Activated B cell treated with CpG ODN at 0.5 μM for 24 hours (primary cell): ENCODE measurements at regions of chr10 and their contacts with region 1.

Region 1: DNA sequence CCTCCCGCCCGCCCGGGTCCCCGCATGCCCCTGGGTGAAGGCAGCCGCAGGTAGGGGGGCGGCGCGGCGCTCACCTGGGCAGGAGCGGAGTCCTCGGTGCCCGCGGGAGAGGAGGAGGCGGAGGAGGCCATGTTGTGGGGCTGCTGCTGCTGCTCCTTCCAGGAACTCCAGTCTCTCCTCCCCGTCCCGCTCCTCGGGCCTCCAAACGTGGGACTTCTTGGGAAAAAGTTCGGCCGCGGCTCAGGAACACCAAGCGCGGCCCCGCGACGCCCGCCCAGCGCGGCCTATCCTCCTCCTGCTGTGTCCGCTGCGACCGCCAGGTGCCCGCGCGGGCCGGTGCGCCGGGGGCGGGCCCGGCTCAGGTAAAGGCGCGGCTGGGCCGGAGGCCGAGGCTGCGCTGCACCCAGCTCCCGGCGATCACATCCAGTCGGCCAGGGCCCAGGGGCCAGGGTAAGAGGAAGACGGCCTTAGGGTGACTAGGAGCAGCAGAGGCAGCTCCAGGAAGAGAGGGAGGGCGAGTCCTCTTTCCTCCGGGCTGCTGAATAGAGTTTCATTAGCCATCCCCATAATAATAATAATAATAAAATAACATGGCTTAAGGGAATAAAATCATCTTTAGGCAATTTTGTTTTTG is 45.0 kb upstream of the CDK1 start:
- DNase-seq: peak; percentile 45
- ATAC-seq: peak; percentile 83
- H3K4me3 Mint-ChIP-seq: peak overlapping the region; percentile 93
- H3K27ac Mint-ChIP-seq: no peak overlapping the region
- H3K4me1 Mint-ChIP-seq: peaks cover 36% of the 10 kb centered on the region
- H3K27me3 Mint-ChIP-seq: peaks cover 4% of the 10 kb centered on the region
- CTCF ChIP-seq: no peak

Region 2: DNA sequence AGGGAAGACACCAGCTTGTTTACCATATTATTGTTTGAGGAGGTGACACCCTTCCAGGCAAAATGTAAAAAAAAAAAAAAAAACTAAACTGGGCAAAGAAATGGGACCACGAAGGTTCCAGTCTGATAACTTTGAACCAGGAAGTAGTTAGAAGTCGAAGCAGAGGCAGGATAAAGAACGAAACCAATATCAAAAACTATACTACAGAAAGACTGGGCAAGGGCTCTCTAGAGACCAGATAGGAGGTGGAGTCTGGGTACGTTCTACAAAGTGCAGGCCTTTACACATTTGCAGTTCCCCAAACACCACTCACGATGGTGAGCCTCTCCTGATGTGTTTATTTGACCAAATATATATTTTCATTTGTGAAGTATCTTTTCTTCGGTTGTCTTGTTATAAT is 80.7 kb before region 1 on chr10:
- CTCF ChIA-PET with region 1: no interaction called
- POLR2A ChIA-PET with region 1: no interaction called
- intact Hi-C with region 1: loop called (anchors 2 kb)
- DNase-seq: no peak
- ATAC-seq: peak; percentile 100
- H3K4me3 Mint-ChIP-seq: peak overlapping the region; percentile 28
- H3K27ac Mint-ChIP-seq: peak overlapping the region; percentile 64
- H3K4me1 Mint-ChIP-seq: peaks cover 14% of the 10 kb centered on the region
- H3K27me3 Mint-ChIP-seq: no peaks in the 10 kb centered on the region
- CTCF ChIP-seq: no peak

Region 3: DNA sequence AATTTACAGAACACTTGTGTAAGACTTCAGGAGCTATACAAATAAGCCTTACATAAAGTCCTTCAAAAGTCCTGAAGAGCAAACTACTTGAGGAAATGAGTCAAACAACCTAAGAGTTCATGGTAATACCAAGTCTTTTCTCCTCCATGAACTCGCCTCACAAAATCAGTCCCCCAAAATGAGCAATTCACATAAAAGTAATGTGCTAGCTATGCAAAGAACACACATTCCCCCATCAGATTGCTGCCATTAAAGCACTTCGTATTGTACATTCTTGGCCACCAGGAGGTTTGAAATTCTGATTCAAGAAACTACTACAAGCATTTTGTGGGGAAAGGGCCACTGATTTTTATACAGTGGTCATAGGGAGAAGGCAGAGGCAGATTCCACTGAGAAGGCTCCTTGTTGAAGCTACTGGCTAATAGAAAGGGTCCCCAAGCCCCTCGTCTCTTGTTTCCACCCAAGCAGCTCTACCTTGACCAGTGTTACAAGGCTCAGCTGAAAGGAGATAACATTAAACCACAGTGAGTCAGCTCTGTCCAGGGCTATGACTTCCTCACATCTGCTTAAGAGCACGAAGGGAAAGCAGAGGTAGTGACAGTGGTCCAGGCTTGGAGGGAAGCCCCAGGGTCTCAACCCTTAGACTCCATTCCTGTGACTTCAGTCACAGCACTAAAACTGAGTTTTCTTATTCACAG is 70.2 kb before region 1 on chr10:
- CTCF ChIA-PET with region 1: no interaction called
- POLR2A ChIA-PET with region 1: no interaction called
- intact Hi-C with region 1: no loop called
- DNase-seq: no peak
- ATAC-seq: no peak
- H3K4me3 Mint-ChIP-seq: no peak overlapping the region
- H3K27ac Mint-ChIP-seq: no peak overlapping the region
- H3K4me1 Mint-ChIP-seq: no peaks in the 10 kb centered on the region
- H3K27me3 Mint-ChIP-seq: peaks cover 2% of the 10 kb centered on the region
- CTCF ChIP-seq: no peak

Region 4: DNA sequence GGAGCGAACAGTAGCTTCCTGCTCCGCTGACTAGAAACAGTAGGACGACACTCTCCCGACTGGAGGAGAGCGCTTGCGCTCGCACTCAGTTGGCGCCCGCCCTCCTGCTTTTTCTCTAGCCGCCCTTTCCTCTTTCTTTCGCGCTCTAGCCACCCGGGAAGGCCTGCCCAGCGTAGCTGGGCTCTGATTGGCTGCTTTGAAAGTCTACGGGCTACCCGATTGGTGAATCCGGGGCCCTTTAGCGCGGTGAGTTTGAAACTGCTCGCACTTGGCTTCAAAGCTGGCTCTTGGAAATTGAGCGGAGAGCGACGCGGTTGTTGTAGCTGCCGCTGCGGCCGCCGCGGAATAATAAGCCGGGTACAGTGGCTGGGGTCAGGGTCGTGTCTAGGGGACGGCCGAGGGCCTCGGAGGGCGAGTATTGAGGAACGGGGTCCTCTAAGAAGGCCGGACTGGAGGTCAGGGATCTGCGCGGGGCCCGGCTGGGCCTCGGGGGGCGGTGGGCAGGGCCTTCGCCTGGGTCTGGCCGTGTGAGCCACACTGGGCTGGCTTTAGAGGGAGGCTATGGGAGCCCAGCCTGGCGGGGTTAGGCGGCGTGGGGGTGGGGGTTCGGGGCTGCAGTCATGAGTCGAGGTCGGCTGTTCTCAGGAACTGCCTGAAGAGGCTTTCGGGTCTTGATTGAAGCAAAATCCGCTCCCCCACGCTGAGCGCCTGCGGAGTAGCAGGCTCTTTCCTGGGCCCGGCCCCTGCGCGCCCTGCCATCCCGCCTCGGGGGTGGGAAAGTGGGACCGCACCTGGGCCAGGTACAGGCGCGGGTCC is 45.1 kb after region 1 on chr10 and contains the start of gene CDK1:
- CTCF ChIA-PET with region 1: no interaction called
- POLR2A ChIA-PET with region 1: no interaction called
- intact Hi-C with region 1: loop called (anchors 1 kb)
- DNase-seq: peak; percentile 86
- ATAC-seq: peak; percentile 99
- H3K4me3 Mint-ChIP-seq: peak within 1 kb of the TSS; percentile 96
- H3K27ac Mint-ChIP-seq: peak within 1 kb of the TSS; percentile 84
- H3K4me1 Mint-ChIP-seq: peaks cover 17% of the 10 kb centered on the region
- H3K27me3 Mint-ChIP-seq: peaks cover 3% of the 10 kb centered on the region
- CTCF ChIP-seq: no peak
- total RNA-seq, gene CDK1: 1.5 and 1.9 TPM in 2 replicates